Activated CD4-positive, alpha-beta T cell treated with anti-CD3 and anti-CD28 coated beads for 36 hours (primary cell): ENCODE measurements at regions of chr1 and their contacts with region 1.

Region 1: GRCh38 chr1:170886460-170886859 is 48.9 kb upstream of the MROH9 start:
- DNase-seq: no peak
- ATAC-seq: no peak
- H3K4me3 Mint-ChIP-seq: no peak overlapping the region
- H3K27ac Mint-ChIP-seq: no peak overlapping the region
- H3K4me1 Mint-ChIP-seq: no peaks in the 10 kb centered on the region
- H3K27me3 Mint-ChIP-seq: peaks cover 11% of the 10 kb centered on the region

Region 2: GRCh38 chr1:170866646-170867045 is 19.8 kb before region 1 on chr1:
- CTCF ChIA-PET with region 1: interaction called, 3 read pairs
- POLR2A ChIA-PET with region 1: no interaction called
- intact Hi-C with region 1: loop called in 1 of 2 experiments (anchors 2 kb)
- DNase-seq: no peak
- ATAC-seq: no peak
- H3K4me3 Mint-ChIP-seq: no peak overlapping the region
- H3K27ac Mint-ChIP-seq: no peak overlapping the region
- H3K4me1 Mint-ChIP-seq: no peaks in the 10 kb centered on the region
- H3K27me3 Mint-ChIP-seq: peaks cover 5% of the 10 kb centered on the region